ENCODE measurements at regions of chr10 and their contacts with region 1.

Region 1: GRCh38 chr10:90288391-90288933 is 569.4 kb downstream of the HTR7 start:
- DNase-seq: peak; percentile 29
- H3K4me3 ChIP-seq: no peak overlapping the region
- H3K27ac ChIP-seq: no peak overlapping the region
- H3K4me1 ChIP-seq: peaks cover 8% of the 10 kb centered on the region
- H3K27me3 ChIP-seq: no peaks in the 10 kb centered on the region
- CTCF ChIP-seq: peak; percentile 29 to 56

Region 2: DNA sequence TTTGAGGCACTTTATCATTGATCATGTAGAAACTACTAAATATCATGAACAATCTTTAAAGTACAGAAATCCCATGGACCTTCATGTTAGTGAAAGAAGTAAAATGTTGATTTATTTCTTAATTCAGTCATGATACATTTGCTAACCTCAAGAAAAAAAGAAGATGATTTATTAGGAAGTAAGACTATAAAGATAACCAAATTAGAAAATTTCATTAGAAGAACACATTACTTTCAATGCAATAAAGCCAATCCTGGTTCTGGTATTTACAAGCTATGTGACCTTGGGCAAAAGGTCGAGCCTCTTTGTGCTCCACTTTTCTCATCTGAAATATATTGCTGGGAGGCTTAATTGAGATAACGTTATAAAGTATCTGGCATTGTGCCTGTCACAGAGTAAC is 222.0 kb before region 1 on chr10:
- CTCF ChIA-PET with region 1: no interaction called
- dilution Hi-C with region 1: no loop called
- in situ Hi-C with region 1: no loop called
- intact Hi-C with region 1: no loop called
- DNase-seq: no peak
- H3K4me3 ChIP-seq: no peak overlapping the region
- H3K27ac ChIP-seq: no peak overlapping the region
- H3K4me1 ChIP-seq: no peaks in the 10 kb centered on the region
- H3K27me3 ChIP-seq: no peaks in the 10 kb centered on the region
- CTCF ChIP-seq: no peak

Region 3: DNA sequence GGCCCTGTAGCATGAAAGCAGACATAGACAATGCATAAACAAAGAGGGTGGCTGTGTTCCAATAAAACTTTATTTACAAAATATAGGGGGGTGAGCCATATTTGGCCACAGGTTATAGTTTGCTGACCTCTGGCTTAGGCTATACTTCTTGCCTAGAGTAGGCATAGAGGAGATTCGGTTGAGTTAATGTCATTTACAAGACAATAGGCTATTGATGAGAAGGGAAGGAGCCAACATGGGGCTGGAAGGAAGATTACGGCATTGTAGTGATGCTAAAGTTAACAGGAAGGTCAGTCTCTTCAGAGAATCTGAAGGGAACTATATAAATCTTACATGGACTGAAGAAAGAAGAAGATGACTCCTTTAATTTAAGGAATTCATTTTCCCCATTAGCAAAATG is 105.8 kb after region 1 on chr10:
- CTCF ChIA-PET with region 1: no interaction called
- dilution Hi-C with region 1: no loop called
- in situ Hi-C with region 1: no loop called
- intact Hi-C with region 1: no loop called
- DNase-seq: no peak
- H3K4me3 ChIP-seq: no peak overlapping the region
- H3K27ac ChIP-seq: no peak overlapping the region
- H3K4me1 ChIP-seq: no peaks in the 10 kb centered on the region
- H3K27me3 ChIP-seq: no peaks in the 10 kb centered on the region
- CTCF ChIP-seq: no peak

Region 4: DNA sequence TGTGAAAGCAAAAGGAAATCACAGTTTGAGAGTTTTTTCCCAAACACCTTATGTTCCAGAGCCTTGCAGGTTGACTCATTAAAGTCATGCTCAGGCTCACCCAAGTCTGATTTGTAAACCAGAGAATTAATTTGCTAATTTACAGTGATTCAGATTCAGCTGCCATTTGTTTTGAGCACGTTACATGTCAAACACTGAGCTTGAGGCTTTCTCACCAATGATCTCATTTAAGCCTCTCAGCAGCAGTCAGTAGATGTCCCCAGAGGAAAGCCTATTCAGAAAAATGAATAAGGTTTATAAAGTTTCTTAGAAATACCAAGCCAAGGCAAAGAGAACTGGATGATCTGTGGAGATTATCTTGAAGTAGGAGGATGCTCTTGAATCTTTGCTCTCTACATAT is 149.0 kb after region 1 on chr10:
- CTCF ChIA-PET with region 1: interaction called, 4 read pairs
- dilution Hi-C with region 1: no loop called
- in situ Hi-C with region 1: no loop called
- intact Hi-C with region 1: loop called (anchors 2 kb)
- DNase-seq: peak; percentile 31
- H3K4me3 ChIP-seq: no peak overlapping the region
- H3K27ac ChIP-seq: no peak overlapping the region
- H3K4me1 ChIP-seq: no peaks in the 10 kb centered on the region
- H3K27me3 ChIP-seq: no peaks in the 10 kb centered on the region
- CTCF ChIP-seq: peak in 1 of 2 donors; percentile 41

Region 5: DNA sequence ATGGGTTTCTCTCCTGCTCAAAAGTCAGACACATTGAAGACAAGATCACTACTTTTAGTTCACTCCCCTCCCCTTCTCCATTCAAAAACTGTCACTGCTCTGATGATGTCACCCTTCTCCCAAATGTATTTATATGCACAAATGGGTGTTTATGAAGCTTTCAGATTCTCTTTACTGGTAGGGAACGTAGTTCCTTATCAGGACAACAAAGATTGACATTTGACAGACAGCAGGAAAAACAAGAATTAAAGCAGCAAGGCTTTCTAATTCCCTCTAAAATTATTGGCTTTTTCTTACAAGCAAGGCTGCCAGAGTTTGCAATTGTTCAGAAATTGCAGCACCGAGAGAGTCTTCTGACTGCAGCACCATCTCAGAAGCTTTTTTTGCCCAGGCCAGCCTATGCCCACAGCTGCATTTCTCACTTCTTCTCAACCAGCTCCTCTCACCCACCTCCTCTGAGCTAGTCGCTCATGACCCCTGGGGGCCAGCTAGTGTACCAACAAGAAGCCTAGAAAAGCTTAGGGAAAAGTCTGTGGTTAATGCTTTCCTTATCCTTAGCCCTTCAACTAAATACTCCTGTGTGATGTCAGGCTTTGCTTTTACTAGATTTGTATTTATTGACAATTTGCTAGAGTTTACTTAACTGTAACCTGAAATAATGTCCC is 304.3 kb after region 1 on chr10:
- CTCF ChIA-PET with region 1: interaction called, 6 read pairs
- dilution Hi-C with region 1: no loop called
- in situ Hi-C with region 1: no loop called
- intact Hi-C with region 1: loop called (anchors 1 kb)
- DNase-seq: peak; percentile 62
- H3K4me3 ChIP-seq: no peak overlapping the region
- H3K27ac ChIP-seq: no peak overlapping the region
- H3K4me1 ChIP-seq: peaks cover 4% of the 10 kb centered on the region
- H3K27me3 ChIP-seq: no peaks in the 10 kb centered on the region
- CTCF ChIP-seq: peak; percentile 63 to 79

Region 6: GRCh38 chr10:90652519-90652918 is 364.1 kb after region 1 on chr10:
- CTCF ChIA-PET with region 1: no interaction called
- dilution Hi-C with region 1: no loop called
- in situ Hi-C with region 1: no loop called
- intact Hi-C with region 1: loop called (anchors 1 kb)
- DNase-seq: peak; percentile 37
- H3K4me3 ChIP-seq: no peak overlapping the region
- H3K27ac ChIP-seq: no peak overlapping the region
- H3K4me1 ChIP-seq: no peaks in the 10 kb centered on the region
- H3K27me3 ChIP-seq: no peaks in the 10 kb centered on the region
- CTCF ChIP-seq: peak; percentile 60 to 73

Region 7: DNA sequence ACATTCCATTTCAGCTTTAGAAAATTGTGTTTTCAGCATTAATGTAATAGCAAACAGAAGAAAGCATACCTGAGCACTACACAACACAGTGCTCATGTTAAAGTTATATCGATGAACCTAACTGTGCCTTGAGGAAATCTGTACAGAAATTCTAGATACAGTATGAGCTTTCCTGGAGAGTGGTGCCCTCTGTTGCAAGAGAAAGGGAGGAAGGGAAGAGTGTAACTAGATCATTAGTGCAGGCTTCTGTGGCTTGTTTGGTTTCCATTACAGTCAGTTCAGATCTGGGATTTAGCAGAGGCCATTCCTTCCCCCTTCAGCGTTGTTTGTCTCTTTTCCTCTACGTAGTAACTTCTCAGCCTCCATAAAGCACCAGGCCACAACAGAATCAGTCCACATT is 429.7 kb after region 1 on chr10:
- CTCF ChIA-PET with region 1: no interaction called
- dilution Hi-C with region 1: no loop called
- in situ Hi-C with region 1: no loop called
- intact Hi-C with region 1: loop called (anchors 2 kb)
- DNase-seq: no peak
- H3K4me3 ChIP-seq: no peak overlapping the region
- H3K27ac ChIP-seq: no peak overlapping the region
- H3K4me1 ChIP-seq: peaks cover under 1% of the 10 kb centered on the region
- H3K27me3 ChIP-seq: no peaks in the 10 kb centered on the region
- CTCF ChIP-seq: peak in 1 of 2 donors; percentile 16

Region 8: DNA sequence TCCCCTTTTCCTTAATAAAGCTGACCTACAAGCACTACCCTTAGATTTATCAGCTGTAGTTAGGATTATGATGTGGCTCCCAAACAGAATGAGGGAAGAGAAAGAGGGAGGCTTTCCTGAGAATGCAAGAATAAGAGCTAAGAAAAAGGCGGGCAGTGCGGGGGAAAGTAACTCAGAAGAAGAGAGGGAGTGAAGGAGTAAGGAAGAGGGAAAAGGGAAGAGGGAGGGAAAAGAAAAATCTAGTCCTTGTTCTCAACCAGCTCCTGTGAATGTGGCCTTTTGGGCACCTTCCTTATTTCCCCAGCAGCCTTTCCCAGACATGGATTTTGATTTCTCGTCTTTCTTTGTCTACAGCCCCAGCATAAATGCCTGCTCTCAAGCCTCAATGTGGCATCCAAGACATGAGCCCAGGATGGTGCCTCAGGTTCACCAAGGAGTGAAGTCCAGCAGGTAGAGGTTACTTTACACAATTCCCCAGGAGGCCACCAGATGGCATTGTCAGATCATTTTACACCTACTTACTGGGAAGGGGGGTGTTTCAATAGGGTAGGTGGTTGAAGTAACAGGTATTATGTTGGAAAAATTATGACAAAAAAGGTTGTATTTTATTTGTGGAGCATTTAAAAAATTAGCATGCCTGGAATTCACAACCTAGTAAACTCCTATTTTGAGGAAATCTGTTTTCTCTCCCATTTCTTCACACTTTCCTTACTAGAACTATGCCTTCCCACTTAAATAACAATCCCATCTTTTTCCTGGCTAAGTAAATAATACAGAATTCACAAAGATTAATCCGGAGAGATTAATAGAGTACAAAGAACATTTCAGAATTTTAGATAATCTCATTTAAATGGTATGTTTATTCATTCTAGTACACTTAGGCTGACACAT is 462.9 kb after region 1 on chr10:
- CTCF ChIA-PET with region 1: no interaction called
- dilution Hi-C with region 1: no loop called
- in situ Hi-C with region 1: no loop called
- intact Hi-C with region 1: loop called (anchors 10 kb)
- DNase-seq: peak; percentile 46
- H3K4me3 ChIP-seq: no peak overlapping the region
- H3K27ac ChIP-seq: no peak overlapping the region
- H3K4me1 ChIP-seq: peaks cover 5% of the 10 kb centered on the region
- H3K27me3 ChIP-seq: no peaks in the 10 kb centered on the region
- CTCF ChIP-seq: peak; percentile 71 to 85

Region 9: GRCh38 chr10:90862908-90863514 is 574.5 kb after region 1 on chr10:
- CTCF ChIA-PET with region 1: interaction called, 3 read pairs
- dilution Hi-C with region 1: no loop called
- in situ Hi-C with region 1: no loop called
- intact Hi-C with region 1: loop called (anchors 1 kb)
- DNase-seq: peak; percentile 35
- H3K4me3 ChIP-seq: no peak overlapping the region
- H3K27ac ChIP-seq: no peak overlapping the region
- H3K4me1 ChIP-seq: peaks cover 16% of the 10 kb centered on the region
- H3K27me3 ChIP-seq: no peaks in the 10 kb centered on the region
- CTCF ChIP-seq: peak; percentile 81 to 93